Gastrocnemius medialis (tissue), 4 donors: ENCODE measurements at regions of chr2 and their contacts with region 1.

Region 1: GRCh38 chr2:121649596-121650314 is 493 bp upstream of the CLASP1 start:
- DNase-seq: peak; percentile 96 to 98
- ATAC-seq: peak; percentile 86 to 87
- H3K4me3 ChIP-seq: peak overlapping the region; percentile 76 to 99 (median 96)
- H3K27ac ChIP-seq: peak overlapping the region; percentile 95 to 100 (median 98)
- H3K4me1 ChIP-seq: peaks cover 47 to 48% of the 10 kb centered on the region in 2 donors
- H3K27me3 ChIP-seq: no peaks in the 10 kb centered on the region
- CTCF ChIP-seq: peak in 1 of 5 experiments; percentile 32
- POLR2A ChIP-seq: peak in 1 of 2 donors; percentile 9

Region 2: GRCh38 chr2:121530212-121530705 is 119.5 kb before region 1 on chr2:
- in situ Hi-C with region 1: loop called in 3 of 4 experiments (anchors 5 to 25 kb)
- intact Hi-C with region 1: loop called (anchors 1 kb)
- DNase-seq: peak; percentile 57 to 67
- ATAC-seq: peak; percentile 68 to 73
- H3K4me3 ChIP-seq: peak overlapping the region; percentile 68 to 80 (median 70)
- H3K27ac ChIP-seq: peak overlapping the region; percentile 85 to 95 (median 92)
- H3K4me1 ChIP-seq: peaks cover 55 to 60% of the 10 kb centered on the region in 2 donors
- H3K27me3 ChIP-seq: no peaks in the 10 kb centered on the region
- CTCF ChIP-seq: no peak
- POLR2A ChIP-seq: no peak

Region 3: DNA sequence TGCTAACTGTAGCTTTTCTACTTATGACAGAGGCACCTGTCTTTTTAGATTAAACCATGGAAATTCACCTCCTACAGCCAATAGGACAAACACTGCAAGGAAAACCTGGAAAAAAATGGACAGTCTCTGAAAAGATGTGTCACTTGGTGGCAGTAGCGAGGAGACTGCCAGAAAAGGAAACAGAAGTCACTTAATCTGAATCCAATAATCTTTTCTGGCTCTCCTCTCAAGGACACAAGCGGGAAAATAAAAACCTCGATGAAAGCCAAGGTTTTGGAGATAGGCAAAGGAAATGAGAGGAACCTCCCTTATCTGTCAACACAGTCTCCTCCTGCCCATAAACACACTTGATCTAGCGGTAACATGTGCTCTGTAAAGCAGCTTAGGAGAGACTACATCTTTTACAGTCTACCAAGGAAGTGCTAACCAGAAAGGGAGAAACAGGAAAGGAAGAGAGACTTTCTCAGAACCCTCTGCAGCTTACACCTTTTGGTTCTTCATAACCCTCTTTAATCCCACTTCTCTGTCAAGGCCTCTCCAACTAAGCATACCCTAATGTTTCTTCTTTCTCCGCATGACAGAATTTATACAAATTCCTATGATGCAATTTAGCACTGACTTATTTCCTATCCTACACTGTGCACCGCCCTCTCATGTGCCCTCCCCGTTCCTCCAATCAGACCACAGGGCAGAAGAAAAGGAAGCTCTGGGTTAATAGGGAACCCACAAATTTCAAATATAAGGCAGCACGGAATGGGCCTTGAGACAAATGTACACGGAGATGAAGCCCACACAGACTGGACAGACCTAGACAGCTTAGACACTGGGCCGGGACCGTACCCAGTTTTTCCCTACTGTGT is 53.3 kb before region 1 on chr2:
- in situ Hi-C with region 1: loop called in 1 of 4 experiments (anchors 10 kb)
- intact Hi-C with region 1: no loop called
- DNase-seq: no peak
- ATAC-seq: peak; percentile 63 to 72
- H3K4me3 ChIP-seq: peak overlapping the region; percentile 17 to 54 (median 21)
- H3K27ac ChIP-seq: peak overlapping the region; percentile 77 to 82 (median 80)
- H3K4me1 ChIP-seq: peaks cover 56 to 60% of the 10 kb centered on the region in 2 donors
- H3K27me3 ChIP-seq: no peaks in the 10 kb centered on the region
- CTCF ChIP-seq: peak in 3 of 5 experiments; percentile 21 to 55 (median 52)
- POLR2A ChIP-seq: no peak

Region 4: GRCh38 chr2:121722479-121722878 is 72.7 kb after region 1 on chr2:
- in situ Hi-C with region 1: no loop called
- intact Hi-C with region 1: loop called (anchors 2 kb)
- DNase-seq: peak; percentile 47 to 64
- ATAC-seq: peak; percentile 92 to 96
- H3K4me3 ChIP-seq: no peak overlapping the region
- H3K27ac ChIP-seq: peak overlapping the region; percentile 82 to 90 (median 84)
- H3K4me1 ChIP-seq: peaks cover 12 to 17% of the 10 kb centered on the region in 2 donors
- H3K27me3 ChIP-seq: no peaks in the 10 kb centered on the region
- CTCF ChIP-seq: no peak
- POLR2A ChIP-seq: no peak

Region 5: GRCh38 chr2:121755236-121756111 is 105.7 kb after region 1 on chr2 and contains the start of gene TSN:
- in situ Hi-C with region 1: no loop called
- intact Hi-C with region 1: loop called (anchors 1 kb)
- DNase-seq: peak; percentile 97
- ATAC-seq: peak; percentile 99
- H3K4me3 ChIP-seq: peak within 1 kb of the TSS; percentile 79 to 94 (median 90)
- H3K27ac ChIP-seq: peak within 1 kb of the TSS; percentile 76 to 89 (median 85)
- H3K4me1 ChIP-seq: peaks cover 29 to 32% of the 10 kb centered on the region in 2 donors
- H3K27me3 ChIP-seq: no peaks in the 10 kb centered on the region
- CTCF ChIP-seq: no peak
- POLR2A ChIP-seq: peak; percentile 43 to 50
- total RNA-seq, gene TSN: 31.8 to 49.3 (median 41.2) TPM